GM12878 (cell line): ENCODE measurements at regions of chr7 and their contacts with region 1.

Region 1: GRCh38 chr7:37181550-37181932 is 267.1 kb downstream of the ELMO1 start:
- DNase-seq: no peak
- ATAC-seq: peak; percentile 14; the same call in 2 of the 3 replicates
- H3K4me3 ChIP-seq: no peak overlapping the region
- H3K27ac ChIP-seq: no peak overlapping the region
- H3K4me1 ChIP-seq: no peaks in the 10 kb centered on the region
- H3K27me3 ChIP-seq: no peaks in the 10 kb centered on the region
- CTCF ChIP-seq: no peak
- EP300 ChIP-seq: no peak
- POLR2A ChIP-seq: no peak
- RAD21 ChIP-seq: no peak

Region 2: DNA sequence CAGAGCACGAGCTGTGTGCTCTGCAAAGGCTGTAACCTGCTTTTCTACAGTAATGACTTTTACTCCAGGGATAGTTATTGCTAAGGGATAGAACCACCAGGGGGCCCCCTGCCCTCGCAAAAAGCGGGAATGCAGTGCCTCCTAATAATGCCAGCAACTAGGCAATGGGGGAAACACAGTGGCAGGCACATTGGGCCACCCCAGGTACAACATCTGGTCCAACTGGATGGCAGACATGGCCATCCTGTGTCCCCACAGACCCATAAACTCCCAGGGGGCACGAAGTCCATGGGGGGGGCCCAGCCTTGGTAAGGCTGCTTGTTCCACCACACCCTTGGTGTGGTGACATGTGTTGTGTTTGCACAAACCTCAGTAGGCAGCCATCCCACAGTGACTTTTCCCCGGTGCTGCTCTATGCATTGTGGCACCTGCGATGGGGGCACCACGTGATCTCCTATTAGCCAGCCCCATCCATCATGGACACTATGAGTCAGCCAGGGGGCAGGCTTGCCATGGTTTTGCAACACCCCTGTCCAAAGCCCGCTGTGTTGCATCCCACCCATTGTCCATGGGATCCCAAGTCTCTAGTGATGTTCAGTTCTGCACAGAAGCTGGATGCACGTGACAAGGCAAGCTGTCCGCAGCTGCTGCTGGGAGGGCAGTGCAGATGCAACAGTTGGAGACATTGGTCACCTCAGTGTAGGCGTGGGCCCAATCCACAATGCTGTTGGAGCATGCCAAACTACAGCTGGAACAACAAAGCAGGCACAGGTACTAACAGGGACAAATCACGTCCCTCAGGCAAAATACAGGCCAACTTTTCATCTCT is 707.9 kb before region 1 on chr7:
- CTCF ChIA-PET with region 1: interaction called, 17 read pairs
- POLR2A ChIA-PET with region 1: no interaction called
- RAD21 ChIA-PET with region 1: interaction called, 7 read pairs
- SMC1A ChIA-PET with region 1: interaction called, 5 read pairs
- in situ Hi-C with region 1: no loop called
- intact Hi-C with region 1: loop called (anchors 5 kb)
- DNase-seq: no peak
- ATAC-seq: peak; percentile 82
- H3K4me3 ChIP-seq: no peak overlapping the region
- H3K27ac ChIP-seq: no peak overlapping the region
- H3K4me1 ChIP-seq: no peaks in the 10 kb centered on the region
- H3K27me3 ChIP-seq: no peaks in the 10 kb centered on the region
- CTCF ChIP-seq: peak; percentile 50 to 55 (median 54)
- EP300 ChIP-seq: no peak
- POLR2A ChIP-seq: no peak
- RAD21 ChIP-seq: peak; percentile 59

Region 3: GRCh38 chr7:36881233-36881874 is 300.2 kb before region 1 on chr7:
- CTCF ChIA-PET with region 1: interaction called, 8 read pairs
- POLR2A ChIA-PET with region 1: no interaction called
- RAD21 ChIA-PET with region 1: interaction called, 6 read pairs
- SMC1A ChIA-PET with region 1: interaction called, 8 read pairs
- in situ Hi-C with region 1: no loop called
- intact Hi-C with region 1: loop called (anchors 10 kb)
- DNase-seq: no peak
- ATAC-seq: no peak
- H3K4me3 ChIP-seq: no peak overlapping the region
- H3K27ac ChIP-seq: no peak overlapping the region
- H3K4me1 ChIP-seq: no peaks in the 10 kb centered on the region
- H3K27me3 ChIP-seq: no peaks in the 10 kb centered on the region
- CTCF ChIP-seq: no peak
- EP300 ChIP-seq: no peak
- POLR2A ChIP-seq: no peak
- RAD21 ChIP-seq: no peak

Region 4: DNA sequence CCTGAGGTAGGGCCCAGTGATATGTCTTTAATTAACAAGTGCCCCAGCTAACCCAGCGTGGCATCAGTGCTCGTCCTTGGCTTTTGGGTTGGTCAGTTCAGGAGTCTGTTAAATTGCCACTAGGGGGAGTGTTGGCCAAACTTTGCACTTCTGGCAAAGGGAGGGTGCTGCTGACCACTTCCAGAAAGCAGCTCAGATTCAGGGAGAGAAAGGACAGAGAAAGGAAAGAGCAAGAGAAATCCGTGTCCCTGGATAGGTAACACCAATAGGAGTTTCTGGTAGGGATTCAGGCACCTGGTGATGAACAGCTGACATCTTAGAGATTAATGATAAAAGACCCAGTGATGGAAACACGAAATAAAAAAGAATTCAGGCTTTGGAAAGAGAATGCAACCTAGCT is 214.2 kb before region 1 on chr7:
- CTCF ChIA-PET with region 1: interaction called, 94 read pairs
- POLR2A ChIA-PET with region 1: no interaction called
- RAD21 ChIA-PET with region 1: interaction called, 40 read pairs
- SMC1A ChIA-PET with region 1: interaction called, 29 read pairs
- in situ Hi-C with region 1: no loop called
- intact Hi-C with region 1: loop called (anchors 5 kb)
- DNase-seq: no peak
- ATAC-seq: peak; percentile 98
- H3K4me3 ChIP-seq: no peak overlapping the region
- H3K27ac ChIP-seq: no peak overlapping the region
- H3K4me1 ChIP-seq: no peaks in the 10 kb centered on the region
- H3K27me3 ChIP-seq: no peaks in the 10 kb centered on the region
- CTCF ChIP-seq: peak; percentile 51 to 70 (median 53)
- EP300 ChIP-seq: no peak
- POLR2A ChIP-seq: no peak
- RAD21 ChIP-seq: no peak

Region 5: DNA sequence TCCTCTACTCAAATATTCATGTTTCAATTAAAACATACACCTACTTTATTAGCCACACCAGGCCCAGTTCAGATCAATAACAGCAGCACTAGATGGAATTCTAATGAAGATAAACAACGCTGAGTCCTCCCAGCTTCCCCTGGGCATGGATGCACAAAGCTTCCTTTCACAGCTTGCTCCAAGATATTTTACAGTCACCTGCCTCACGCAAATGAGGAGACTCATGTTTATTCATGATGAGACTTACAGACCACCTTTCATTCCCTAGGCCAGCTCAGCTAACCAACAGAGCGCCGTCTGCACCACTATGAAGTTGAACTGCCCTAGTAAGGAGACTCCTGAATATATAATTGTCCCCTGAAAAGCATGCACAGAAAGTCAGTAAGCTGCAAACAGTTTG is 174.3 kb before region 1 on chr7:
- CTCF ChIA-PET with region 1: interaction called, 23 read pairs
- POLR2A ChIA-PET with region 1: no interaction called
- RAD21 ChIA-PET with region 1: interaction called, 6 read pairs
- SMC1A ChIA-PET with region 1: interaction called, 5 read pairs
- in situ Hi-C with region 1: no loop called
- intact Hi-C with region 1: no loop called
- DNase-seq: no peak
- ATAC-seq: no peak
- H3K4me3 ChIP-seq: no peak overlapping the region
- H3K27ac ChIP-seq: no peak overlapping the region
- H3K4me1 ChIP-seq: no peaks in the 10 kb centered on the region
- H3K27me3 ChIP-seq: no peaks in the 10 kb centered on the region
- CTCF ChIP-seq: no peak
- EP300 ChIP-seq: no peak
- POLR2A ChIP-seq: no peak
- RAD21 ChIP-seq: no peak

Region 6: DNA sequence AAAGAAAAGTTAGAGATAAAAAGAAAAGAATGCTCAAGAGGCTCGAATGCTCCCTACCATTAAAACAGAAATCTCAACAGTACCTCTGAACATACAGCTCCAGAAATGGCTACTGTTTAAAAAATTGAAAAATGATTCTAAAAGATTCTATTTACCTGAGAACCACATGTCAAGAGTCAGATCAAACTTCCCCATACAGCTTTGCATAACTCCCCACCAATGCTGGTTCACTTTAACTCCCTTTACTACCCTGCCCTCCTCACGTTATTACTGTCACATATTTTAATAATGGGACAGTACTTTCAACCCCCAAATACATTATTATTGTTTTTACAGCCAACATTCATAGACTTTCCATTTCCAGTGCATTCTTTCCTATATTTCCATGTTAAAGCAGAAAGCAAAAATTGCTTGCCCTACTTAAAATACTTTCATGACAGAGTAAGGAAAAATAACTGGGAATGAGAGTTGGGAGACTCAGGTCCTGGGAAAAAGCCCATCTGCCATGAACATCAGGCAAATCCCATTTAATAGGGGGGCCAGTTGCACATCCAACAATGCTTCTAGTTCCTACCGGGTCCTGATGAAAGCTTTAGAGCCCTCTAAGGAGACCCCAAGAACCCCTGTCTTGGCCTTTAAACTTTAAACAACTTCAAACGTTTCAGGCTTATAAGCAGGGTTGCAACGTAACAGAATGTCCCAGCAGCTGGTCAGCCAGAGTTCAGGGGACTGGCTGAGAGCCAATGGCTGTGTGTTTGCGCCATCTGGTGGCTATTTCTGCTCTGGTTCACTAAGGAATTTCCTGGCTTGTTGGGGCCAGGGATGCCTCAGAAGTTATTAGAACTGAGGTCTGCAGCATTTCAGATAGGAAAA is 19.7 kb after region 1 on chr7:
- CTCF ChIA-PET with region 1: interaction called, 39 read pairs
- POLR2A ChIA-PET with region 1: interaction called, 3 read pairs
- RAD21 ChIA-PET with region 1: interaction called, 12 read pairs
- SMC1A ChIA-PET with region 1: interaction called, 13 read pairs
- in situ Hi-C with region 1: no loop called
- intact Hi-C with region 1: no loop called
- DNase-seq: no peak
- ATAC-seq: peak; percentile 90
- H3K4me3 ChIP-seq: no peak overlapping the region
- H3K27ac ChIP-seq: no peak overlapping the region
- H3K4me1 ChIP-seq: 0 out of 2 replicates have a peak, but pooled peaks cover 3% of the 10 kb centered on the region
- H3K27me3 ChIP-seq: no peaks in the 10 kb centered on the region
- CTCF ChIP-seq: peak; percentile 76 to 85 (median 80)
- EP300 ChIP-seq: no peak
- POLR2A ChIP-seq: no peak
- RAD21 ChIP-seq: peak; percentile 69

Region 7: DNA sequence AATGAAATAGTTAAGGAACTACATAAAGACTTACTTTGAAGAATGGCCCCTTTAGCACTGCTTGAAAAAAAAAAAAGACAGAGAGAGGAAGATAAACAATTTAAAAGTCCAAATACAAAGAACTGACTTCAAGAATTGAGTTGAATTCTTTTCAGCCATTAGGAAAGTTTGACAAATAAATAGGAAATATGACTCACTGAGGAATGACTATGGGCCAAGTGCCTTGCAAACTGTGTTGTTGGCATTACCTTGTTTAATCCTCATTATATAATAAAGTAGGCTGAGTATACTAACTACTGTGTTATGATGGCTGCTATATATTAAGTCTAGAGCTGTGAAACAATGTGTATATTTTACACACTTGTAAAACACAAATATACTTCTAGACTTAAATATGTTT is 116.0 kb after region 1 on chr7:
- CTCF ChIA-PET with region 1: no interaction called
- POLR2A ChIA-PET with region 1: no interaction called
- RAD21 ChIA-PET with region 1: no interaction called
- SMC1A ChIA-PET with region 1: no interaction called
- in situ Hi-C with region 1: no loop called
- intact Hi-C with region 1: no loop called
- DNase-seq: no peak
- ATAC-seq: no peak
- H3K4me3 ChIP-seq: no peak overlapping the region
- H3K27ac ChIP-seq: no peak overlapping the region
- H3K4me1 ChIP-seq: no peaks in the 10 kb centered on the region
- H3K27me3 ChIP-seq: no peaks in the 10 kb centered on the region
- CTCF ChIP-seq: no peak
- EP300 ChIP-seq: no peak
- POLR2A ChIP-seq: no peak
- RAD21 ChIP-seq: no peak

Region 8: GRCh38 chr7:37336259-37336658 is 154.7 kb after region 1 on chr7:
- CTCF ChIA-PET with region 1: no interaction called
- POLR2A ChIA-PET with region 1: no interaction called
- RAD21 ChIA-PET with region 1: no interaction called
- SMC1A ChIA-PET with region 1: no interaction called
- in situ Hi-C with region 1: no loop called
- intact Hi-C with region 1: no loop called
- DNase-seq: peak; percentile 94
- ATAC-seq: peak; percentile 85
- H3K4me3 ChIP-seq: no peak overlapping the region; the same call in 1 of the 2 replicates
- H3K27ac ChIP-seq: peak overlapping the region; percentile 90
- H3K4me1 ChIP-seq: peaks cover 24% of the 10 kb centered on the region
- H3K27me3 ChIP-seq: no peaks in the 10 kb centered on the region
- CTCF ChIP-seq: no peak
- EP300 ChIP-seq: peak; percentile 80 to 82; a peak in 3 of 4 replicates
- POLR2A ChIP-seq: no peak
- RAD21 ChIP-seq: no peak; the same call in 1 of the 2 replicates